A673 (cell line): ENCODE measurements at regions of chr19 and their contacts with region 1.

Region 1: GRCh38 chr19:33521480-33522370 is at the start of gene PEPD:
- DNase-seq: peak; percentile 94
- H3K4me3 ChIP-seq: peak within 1 kb of the TSS; percentile 92
- H3K27ac ChIP-seq: peak within 1 kb of the TSS; percentile 70
- H3K4me1 ChIP-seq: no peaks in the 10 kb centered on the region
- H3K27me3 ChIP-seq: no peaks in the 10 kb centered on the region
- CTCF ChIP-seq: no peak
- total RNA-seq, gene PEPD: 73.9 and 82.2 TPM in 2 replicates

Region 2: DNA sequence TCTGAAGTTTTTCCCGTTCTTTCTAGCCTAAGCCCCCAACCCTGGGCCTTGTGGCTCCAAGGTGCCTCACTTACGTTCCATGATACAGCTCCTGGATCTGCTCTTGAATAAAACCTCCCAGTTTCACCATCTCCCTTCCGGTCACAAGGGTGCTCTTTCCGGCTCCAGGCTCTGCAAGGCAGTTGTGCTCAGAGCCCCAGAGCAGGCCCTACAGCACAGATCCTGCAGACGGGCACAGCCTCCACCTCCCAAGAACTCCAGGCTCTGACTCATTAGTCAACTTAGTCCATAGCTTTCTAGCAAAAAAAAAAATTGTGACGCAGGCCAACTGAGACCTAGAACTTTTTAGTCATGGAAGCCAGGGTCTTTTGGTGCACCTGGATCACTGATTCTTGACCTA is 262.2 kb before region 1 on chr19:
- CTCF ChIA-PET with region 1: no interaction called
- POLR2A ChIA-PET with region 1: no interaction called
- intact Hi-C with region 1: no loop called
- DNase-seq: no peak
- H3K4me3 ChIP-seq: no peak overlapping the region
- H3K27ac ChIP-seq: no peak overlapping the region
- H3K4me1 ChIP-seq: no peaks in the 10 kb centered on the region
- H3K27me3 ChIP-seq: no peaks in the 10 kb centered on the region
- CTCF ChIP-seq: no peak

Region 3: DNA sequence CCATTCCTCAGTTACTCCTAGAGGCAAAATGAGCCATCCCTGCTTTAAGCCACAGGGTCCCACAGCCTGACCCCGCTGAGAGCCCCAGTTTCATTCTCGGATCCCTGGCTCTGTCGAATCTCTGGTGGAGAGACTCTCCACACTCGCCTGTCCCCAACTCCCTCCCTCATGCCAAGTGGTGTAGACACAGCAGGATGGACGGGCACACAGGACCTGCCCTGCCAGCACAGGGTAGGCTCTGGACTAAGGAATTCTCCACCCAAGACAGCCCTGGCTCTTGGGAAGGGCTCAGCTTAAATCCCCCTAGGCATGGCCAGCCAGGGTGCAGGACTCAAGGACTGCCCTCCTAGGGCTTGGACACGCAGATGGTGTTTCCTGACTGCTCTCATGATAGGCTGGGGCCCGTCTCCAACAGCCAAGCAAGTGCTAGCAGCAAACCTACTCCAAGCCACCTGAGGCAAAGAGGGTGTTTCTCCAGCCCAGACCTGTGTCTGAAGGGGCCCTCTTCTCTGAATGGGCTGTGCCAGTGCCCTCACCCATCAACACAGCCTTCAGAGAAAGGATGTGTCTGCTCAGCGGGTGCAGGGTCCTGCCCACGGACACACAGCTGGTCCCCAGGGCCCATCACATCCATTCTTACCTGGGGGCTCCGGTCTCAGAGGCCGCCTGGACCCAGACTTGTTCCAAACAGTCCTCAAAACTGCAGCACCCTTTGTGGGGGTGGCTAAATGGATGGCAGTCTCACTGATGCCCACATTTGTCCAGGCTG is 65.5 kb before region 1 on chr19:
- CTCF ChIA-PET with region 1: no interaction called
- POLR2A ChIA-PET with region 1: no interaction called
- intact Hi-C with region 1: no loop called
- DNase-seq: no peak
- H3K4me3 ChIP-seq: no peak overlapping the region
- H3K27ac ChIP-seq: no peak overlapping the region
- H3K4me1 ChIP-seq: no peaks in the 10 kb centered on the region
- H3K27me3 ChIP-seq: no peaks in the 10 kb centered on the region
- CTCF ChIP-seq: no peak

Region 4: DNA sequence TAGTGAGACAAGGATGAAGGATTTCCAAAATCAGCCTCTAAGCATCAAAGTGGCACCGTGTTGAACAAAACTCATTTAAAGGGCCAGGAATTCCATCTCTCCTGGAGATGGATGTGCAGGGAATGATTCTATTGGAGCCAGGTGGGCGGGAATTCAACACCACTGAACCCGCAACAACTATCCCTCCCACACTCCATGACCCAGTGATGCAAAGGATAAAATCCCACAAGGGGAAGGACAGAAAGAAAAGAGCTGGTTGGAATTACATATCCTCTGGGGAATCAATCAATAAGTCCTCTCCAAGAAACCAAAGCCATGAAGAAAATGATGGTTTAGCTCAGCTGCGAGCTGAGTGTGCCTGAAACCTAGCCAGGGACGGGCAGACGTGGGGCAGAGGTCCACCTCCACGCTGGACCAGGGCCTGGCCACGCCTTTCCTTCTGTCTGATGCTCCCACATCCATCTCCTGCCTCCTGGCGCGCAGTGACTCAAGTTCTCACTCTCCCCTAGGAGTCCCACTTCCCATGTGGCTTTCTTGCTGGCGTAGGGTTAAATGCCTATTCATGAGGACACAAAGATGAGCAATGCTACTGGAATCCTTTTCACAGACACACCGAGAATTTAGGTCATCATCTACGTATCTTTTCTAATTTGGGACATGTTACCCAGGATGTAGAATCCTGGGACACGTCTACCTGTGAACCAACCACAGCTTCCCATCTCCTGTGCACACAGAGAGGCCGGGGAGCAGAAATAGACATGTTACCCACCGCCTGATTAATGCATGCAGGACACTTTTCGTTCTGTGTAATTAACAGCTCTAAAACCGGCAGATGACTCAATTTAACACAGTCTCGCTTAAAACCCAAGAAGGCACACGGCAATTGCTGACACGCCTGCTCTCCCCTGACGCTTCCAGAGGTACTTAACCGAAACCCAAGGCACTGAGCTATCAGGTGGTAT is 48.8 kb before region 1 on chr19:
- CTCF ChIA-PET with region 1: no interaction called
- POLR2A ChIA-PET with region 1: no interaction called
- intact Hi-C with region 1: loop called (anchors 1 kb)
- DNase-seq: peak; percentile 91
- H3K4me3 ChIP-seq: peak overlapping the region; percentile 5
- H3K27ac ChIP-seq: peak overlapping the region; percentile 77
- H3K4me1 ChIP-seq: peaks cover 23% of the 10 kb centered on the region
- H3K27me3 ChIP-seq: no peaks in the 10 kb centered on the region
- CTCF ChIP-seq: 0 out of 2 replicates have a peak, but pooled peaks have one; percentile 8